GM12878 (cell line): ENCODE measurements at regions of chr4 and their contacts with region 1.

Region 1: GRCh38 chr4:28386776-28387175 is 1526.1 kb downstream of the STIM2 start:
- DNase-seq: no peak
- ATAC-seq: peak; percentile 63
- H3K4me3 ChIP-seq: no peak overlapping the region
- H3K27ac ChIP-seq: no peak overlapping the region
- H3K4me1 ChIP-seq: no peaks in the 10 kb centered on the region
- H3K27me3 ChIP-seq: no peaks in the 10 kb centered on the region
- CTCF ChIP-seq: no peak
- EP300 ChIP-seq: peak in 1 of 2 experiments; percentile 27; a peak in 1 of 4 replicates
- POLR2A ChIP-seq: no peak
- RAD21 ChIP-seq: no peak

Region 2: DNA sequence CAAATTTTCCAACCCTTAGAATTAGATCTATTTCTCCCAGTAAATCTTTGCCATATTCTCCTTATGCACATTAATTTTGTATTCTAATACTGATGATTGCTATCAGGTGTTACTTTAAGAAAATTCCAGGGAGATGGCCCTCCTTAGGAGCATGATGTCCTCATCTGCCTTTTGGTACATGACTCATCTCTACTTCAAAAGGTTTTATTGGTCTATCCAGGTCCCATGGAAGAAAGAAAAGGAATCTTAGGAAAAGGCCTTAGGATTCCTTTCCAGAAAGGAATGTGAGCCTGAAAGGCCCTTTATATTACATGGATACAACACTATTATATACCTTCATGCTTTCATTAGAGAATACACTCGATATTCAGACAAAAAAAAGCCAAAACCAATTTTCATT is 557.9 kb before region 1 on chr4:
- CTCF ChIA-PET with region 1: no interaction called
- POLR2A ChIA-PET with region 1: no interaction called
- RAD21 ChIA-PET with region 1: no interaction called
- SMC1A ChIA-PET with region 1: no interaction called
- in situ Hi-C with region 1: no loop called
- intact Hi-C with region 1: no loop called
- DNase-seq: no peak
- ATAC-seq: no peak
- H3K4me3 ChIP-seq: no peak overlapping the region
- H3K27ac ChIP-seq: no peak overlapping the region
- H3K4me1 ChIP-seq: no peaks in the 10 kb centered on the region
- H3K27me3 ChIP-seq: no peaks in the 10 kb centered on the region
- CTCF ChIP-seq: no peak
- EP300 ChIP-seq: no peak
- POLR2A ChIP-seq: no peak
- RAD21 ChIP-seq: no peak

Region 3: DNA sequence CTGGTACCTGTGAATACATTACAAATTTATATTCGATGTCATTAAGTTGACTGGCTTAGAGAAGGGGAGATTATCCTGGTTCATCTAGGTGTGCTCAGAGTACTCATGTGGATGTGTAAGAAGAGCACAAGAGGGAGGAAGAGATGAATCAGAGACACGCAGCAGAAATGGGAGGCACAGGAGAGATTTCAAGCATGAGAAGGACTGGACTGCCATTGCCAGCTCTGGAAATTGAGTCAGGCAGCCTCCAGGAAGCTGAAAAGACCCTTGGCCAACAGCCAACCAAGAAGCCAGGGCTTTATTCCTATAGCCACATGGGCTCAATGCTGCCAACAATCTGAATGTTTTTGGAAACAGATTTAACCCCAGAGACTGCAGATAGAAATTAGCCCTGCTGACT is 136.1 kb before region 1 on chr4:
- CTCF ChIA-PET with region 1: interaction called, 5 read pairs
- POLR2A ChIA-PET with region 1: interaction called, 11 read pairs
- RAD21 ChIA-PET with region 1: interaction called, 27 read pairs
- SMC1A ChIA-PET with region 1: interaction called, 16 read pairs
- in situ Hi-C with region 1: no loop called
- intact Hi-C with region 1: no loop called
- DNase-seq: no peak
- ATAC-seq: no peak
- H3K4me3 ChIP-seq: no peak overlapping the region
- H3K27ac ChIP-seq: no peak overlapping the region
- H3K4me1 ChIP-seq: no peaks in the 10 kb centered on the region
- H3K27me3 ChIP-seq: no peaks in the 10 kb centered on the region
- CTCF ChIP-seq: no peak
- EP300 ChIP-seq: no peak
- POLR2A ChIP-seq: no peak
- RAD21 ChIP-seq: no peak

Region 4: GRCh38 chr4:28360681-28361080 is 26.1 kb before region 1 on chr4:
- CTCF ChIA-PET with region 1: interaction called, 3 read pairs
- POLR2A ChIA-PET with region 1: no interaction called
- RAD21 ChIA-PET with region 1: no interaction called
- SMC1A ChIA-PET with region 1: interaction called, 10 read pairs
- in situ Hi-C with region 1: no loop called
- intact Hi-C with region 1: no loop called
- DNase-seq: no peak
- ATAC-seq: peak; percentile 66
- H3K4me3 ChIP-seq: no peak overlapping the region
- H3K27ac ChIP-seq: no peak overlapping the region
- H3K4me1 ChIP-seq: no peaks in the 10 kb centered on the region
- H3K27me3 ChIP-seq: no peaks in the 10 kb centered on the region
- CTCF ChIP-seq: no peak
- EP300 ChIP-seq: no peak
- POLR2A ChIP-seq: no peak
- RAD21 ChIP-seq: no peak

Region 5: GRCh38 chr4:28435314-28435713 is 48.5 kb after region 1 on chr4:
- CTCF ChIA-PET with region 1: no interaction called
- POLR2A ChIA-PET with region 1: no interaction called
- RAD21 ChIA-PET with region 1: interaction called, 12 read pairs
- SMC1A ChIA-PET with region 1: interaction called, 15 read pairs
- in situ Hi-C with region 1: no loop called
- intact Hi-C with region 1: no loop called
- DNase-seq: no peak
- ATAC-seq: no peak
- H3K4me3 ChIP-seq: no peak overlapping the region
- H3K27ac ChIP-seq: no peak overlapping the region
- H3K4me1 ChIP-seq: no peaks in the 10 kb centered on the region
- H3K27me3 ChIP-seq: no peaks in the 10 kb centered on the region
- CTCF ChIP-seq: no peak
- EP300 ChIP-seq: no peak
- POLR2A ChIP-seq: no peak
- RAD21 ChIP-seq: no peak

Region 6: DNA sequence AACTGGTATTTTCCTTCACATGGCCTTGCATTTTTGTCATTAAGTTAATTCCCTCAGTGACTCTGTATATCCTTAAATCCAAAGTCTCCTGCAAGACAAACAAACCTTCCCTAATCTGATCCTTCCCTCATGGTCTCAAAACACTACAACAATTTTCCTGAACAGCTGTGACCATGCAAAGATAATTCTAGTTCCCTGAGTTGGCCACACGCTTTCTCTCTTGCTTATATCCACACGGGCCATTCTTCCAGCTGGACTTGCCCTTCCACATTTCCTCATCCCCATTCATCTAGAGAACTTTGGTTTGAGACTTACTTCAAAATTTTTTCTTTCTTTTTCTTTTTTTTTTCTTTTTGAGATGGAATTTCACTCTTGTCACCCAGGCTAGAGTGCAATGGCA is 64.6 kb after region 1 on chr4:
- CTCF ChIA-PET with region 1: no interaction called
- POLR2A ChIA-PET with region 1: interaction called, 4 read pairs
- RAD21 ChIA-PET with region 1: interaction called, 3 read pairs
- SMC1A ChIA-PET with region 1: interaction called, 10 read pairs
- in situ Hi-C with region 1: no loop called
- intact Hi-C with region 1: no loop called
- DNase-seq: no peak
- ATAC-seq: no peak
- H3K4me3 ChIP-seq: no peak overlapping the region
- H3K27ac ChIP-seq: no peak overlapping the region
- H3K4me1 ChIP-seq: no peaks in the 10 kb centered on the region
- H3K27me3 ChIP-seq: no peaks in the 10 kb centered on the region
- CTCF ChIP-seq: no peak
- EP300 ChIP-seq: no peak
- POLR2A ChIP-seq: no peak
- RAD21 ChIP-seq: no peak

Region 7: DNA sequence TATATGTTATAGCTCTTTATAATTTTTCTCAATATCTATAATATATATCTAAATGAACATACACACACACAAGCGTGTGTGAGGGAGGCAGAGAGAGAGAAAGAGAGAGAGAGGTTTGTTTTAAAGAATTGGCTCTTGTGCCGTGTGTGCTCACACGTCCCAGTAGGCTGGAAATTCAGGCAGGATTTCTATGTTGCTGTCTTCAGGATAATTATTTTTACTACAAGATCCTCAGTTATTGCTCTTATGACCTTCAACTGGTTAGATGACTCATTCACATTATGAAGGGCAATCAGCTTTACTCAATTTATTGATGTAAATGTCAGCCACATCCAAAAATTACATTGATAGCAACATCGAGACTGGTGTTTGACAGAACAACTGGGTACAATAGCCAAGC is 812.7 kb after region 1 on chr4:
- CTCF ChIA-PET with region 1: no interaction called
- POLR2A ChIA-PET with region 1: no interaction called
- RAD21 ChIA-PET with region 1: no interaction called
- SMC1A ChIA-PET with region 1: no interaction called
- in situ Hi-C with region 1: no loop called
- intact Hi-C with region 1: no loop called
- DNase-seq: no peak
- ATAC-seq: no peak
- H3K4me3 ChIP-seq: no peak overlapping the region
- H3K27ac ChIP-seq: no peak overlapping the region
- H3K4me1 ChIP-seq: no peaks in the 10 kb centered on the region
- H3K27me3 ChIP-seq: no peaks in the 10 kb centered on the region
- CTCF ChIP-seq: no peak
- EP300 ChIP-seq: no peak
- POLR2A ChIP-seq: no peak
- RAD21 ChIP-seq: no peak